ENCODE measurements at regions of chr19 and their contacts with region 1.

Region 1: DNA sequence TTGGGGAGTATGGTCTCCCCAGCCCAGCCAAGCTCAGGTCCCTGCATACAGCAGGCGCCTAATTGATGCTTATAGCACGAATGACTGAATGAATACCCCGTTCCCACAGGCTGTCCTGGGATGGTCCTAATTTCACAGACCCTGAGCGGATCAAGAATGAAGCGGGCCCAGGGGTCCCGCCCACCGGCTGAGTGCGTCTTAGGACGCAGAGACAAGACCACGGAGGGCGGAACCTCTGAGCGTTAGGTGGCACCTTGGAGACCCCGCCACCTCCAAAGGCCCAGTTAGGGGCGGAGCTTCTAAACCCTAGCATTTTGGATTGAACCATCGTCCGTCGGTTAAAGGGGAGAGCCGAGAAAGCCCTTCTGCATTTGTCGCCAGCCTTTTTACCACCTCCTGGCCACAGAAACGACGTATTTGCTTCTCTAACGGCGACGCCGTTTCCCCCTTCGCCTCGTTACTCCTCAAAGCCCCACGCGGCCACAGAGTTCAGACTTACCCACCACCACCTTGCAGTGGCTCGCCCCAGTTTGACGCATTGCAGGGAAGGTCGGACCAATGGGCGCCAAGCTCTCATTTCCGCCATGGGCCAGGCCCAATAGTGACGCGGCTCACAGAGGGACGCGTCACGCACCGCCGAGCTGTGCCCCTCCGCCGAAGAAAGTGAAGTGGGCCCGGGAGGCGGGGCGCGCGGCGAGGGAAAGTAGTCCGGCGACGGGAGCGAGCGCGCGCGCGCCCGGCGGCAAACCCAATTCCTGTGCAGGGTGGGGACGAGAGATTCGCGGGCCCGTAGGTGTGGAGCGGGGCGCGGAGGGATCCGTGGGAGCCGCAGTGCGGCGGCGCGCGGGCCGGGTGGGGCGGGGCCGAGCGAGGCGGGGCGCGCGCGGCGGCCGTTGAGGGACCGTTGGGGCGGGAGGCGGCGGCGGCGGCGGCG is 479 bp upstream of the CALM3 start:
- DNase-seq: peak; percentile 88 to 100
- H3K4me3 ChIP-seq: peak overlapping the region; percentile 90 to 100 (median 94)
- H3K27ac ChIP-seq: peak overlapping the region; percentile 100
- H3K4me1 ChIP-seq: peaks cover 0 to 19% (median 9%) of the 10 kb centered on the region in 4 experiments; a peak in 5 of 7 replicates
- H3K27me3 ChIP-seq: no peaks in the 10 kb centered on the region
- CTCF ChIP-seq: no peak
- EP300 ChIP-seq: peak in 1 of 2 experiments; percentile 97; a peak in 2 of 3 replicates
- POLR2A ChIP-seq: peak in 1 of 2 experiments; percentile 78; a peak in 2 of 3 replicates
- RAD21 ChIP-seq: no peak

Region 2: DNA sequence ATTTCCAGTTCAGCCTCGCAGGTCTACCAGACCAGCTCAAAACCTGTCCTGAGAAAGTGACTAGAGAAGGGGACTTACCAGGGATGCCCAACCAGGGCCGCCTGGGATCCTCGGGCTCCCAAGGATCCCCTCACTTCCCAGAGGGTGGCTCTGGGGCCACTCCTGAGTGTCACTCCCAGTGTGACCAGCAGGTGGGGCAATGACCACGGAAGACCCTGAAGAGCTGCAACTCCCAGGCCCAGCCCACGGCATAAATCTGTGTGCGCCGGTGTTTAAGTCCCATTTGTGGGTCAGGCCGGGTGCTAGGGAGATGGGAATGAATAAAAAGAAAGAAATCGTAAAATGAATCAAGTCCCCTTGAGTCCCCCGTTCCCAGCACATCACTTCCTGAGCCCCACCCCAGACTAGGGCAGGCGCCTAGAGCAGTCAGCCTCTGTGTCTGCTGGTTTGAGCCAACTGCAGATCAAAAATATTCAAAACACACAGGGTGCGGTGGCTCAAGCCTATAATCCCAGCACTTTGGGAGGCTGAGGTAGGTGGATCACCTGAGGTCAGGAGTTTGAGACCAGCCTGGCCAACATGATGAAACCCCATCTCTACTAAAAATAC is 13.6 kb after region 1 on chr19:
- CTCF ChIA-PET with region 1: interaction called, 21 read pairs
- POLR2A ChIA-PET with region 1: interaction called, 28 read pairs
- DNase-seq: peak; percentile 58 to 97
- H3K4me3 ChIP-seq: no peak overlapping the region
- H3K27ac ChIP-seq: no peak overlapping the region
- H3K4me1 ChIP-seq: no peaks in the 10 kb centered on the region
- H3K27me3 ChIP-seq: no peaks in the 10 kb centered on the region
- CTCF ChIP-seq: peak; percentile 85 to 91 (median 91)
- EP300 ChIP-seq: no peak
- POLR2A ChIP-seq: no peak
- RAD21 ChIP-seq: peak; percentile 75 to 88